ENCODE measurements at regions of chr2 and their contacts with region 1.

Region 1: GRCh38 chr2:134657637-134658250 is 61.1 kb downstream of the TMEM163 start:
- DNase-seq: peak; percentile 51
- H3K4me3 Mint-ChIP-seq: no peak overlapping the region
- H3K27ac Mint-ChIP-seq: no peak overlapping the region
- H3K4me1 Mint-ChIP-seq: peaks cover 10% of the 10 kb centered on the region
- H3K27me3 Mint-ChIP-seq: peaks cover 2% of the 10 kb centered on the region

Region 2: GRCh38 chr2:134692499-134692898 is 34.8 kb after region 1 on chr2:
- CTCF ChIA-PET with region 1: interaction called, 3 read pairs
- POLR2A ChIA-PET with region 1: no interaction called
- intact Hi-C with region 1: loop called (anchors 5 kb)
- DNase-seq: no peak
- H3K4me3 Mint-ChIP-seq: no peak overlapping the region
- H3K27ac Mint-ChIP-seq: no peak overlapping the region
- H3K4me1 Mint-ChIP-seq: no peaks in the 10 kb centered on the region
- H3K27me3 Mint-ChIP-seq: peaks cover 6% of the 10 kb centered on the region

Measured in activated CD4-positive, alpha-beta memory T cell treated with anti-CD3 and anti-CD28 coated beads for 36 hours (primary cell).